Heart right ventricle (tissue), 16 donors: ENCODE measurements at regions of chr1 and their contacts with region 1.

Region 1: GRCh38 chr1:212234431-212235395 is 50.5 kb upstream of the PPP2R5A start:
- DNase-seq: peak in 1 of 2 donors; percentile 73
- ATAC-seq: peak; percentile 94 to 98 (median 96)
- H3K4me3 ChIP-seq: no peak overlapping the region
- H3K27ac ChIP-seq: peak overlapping the region; percentile 59 to 90 (median 75)
- H3K4me1 ChIP-seq: peaks cover 4 to 55% (median 39%) of the 10 kb centered on the region in 9 donors
- H3K27me3 ChIP-seq: no peaks in the 10 kb centered on the region
- CTCF ChIP-seq: no peak

Region 2: DNA sequence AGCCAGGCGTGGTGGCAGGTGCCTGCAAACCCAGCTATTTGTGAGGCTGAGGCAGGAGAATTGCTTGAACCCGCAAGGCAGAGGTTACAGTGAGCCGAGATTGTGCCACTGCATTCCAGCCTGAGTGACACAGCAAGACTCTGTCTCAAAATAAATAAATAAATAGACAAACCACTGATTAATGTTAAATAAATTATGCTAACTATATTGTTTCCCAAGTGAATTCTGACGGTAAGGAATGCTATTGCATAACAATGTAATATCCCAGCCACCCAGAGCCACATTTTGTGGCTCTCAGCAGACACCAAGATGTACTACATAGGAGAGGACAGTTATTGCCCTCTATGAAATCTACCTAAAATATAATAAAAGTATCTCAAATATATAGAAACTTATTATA is 459.5 kb before region 1 on chr1:
- intact Hi-C with region 1: no loop called
- DNase-seq: no peak
- ATAC-seq: no peak
- H3K4me3 ChIP-seq: no peak overlapping the region
- H3K27ac ChIP-seq: no peak overlapping the region
- H3K4me1 ChIP-seq: no peaks in the 10 kb centered on the region
- H3K27me3 ChIP-seq: no peaks in the 10 kb centered on the region
- CTCF ChIP-seq: no peak

Region 3: DNA sequence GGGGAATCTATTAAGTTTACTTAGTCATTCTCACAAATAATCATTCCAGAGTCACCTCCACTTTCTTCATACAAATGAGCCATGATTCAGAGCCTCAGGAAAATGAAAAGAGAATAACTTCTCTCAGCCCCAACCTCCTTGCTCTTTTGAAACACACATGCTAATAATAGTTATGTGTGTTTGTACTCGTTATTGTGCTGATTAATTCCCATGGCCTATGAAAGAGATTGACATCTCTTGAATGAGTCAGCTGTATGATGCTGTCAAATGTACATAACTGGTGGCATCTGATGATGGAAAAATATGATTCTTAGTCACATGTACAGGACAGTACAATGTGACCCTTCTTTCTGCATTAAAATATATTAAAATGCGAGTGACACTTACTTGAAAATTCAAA is 157.7 kb before region 1 on chr1:
- intact Hi-C with region 1: loop called in 1 of 10 experiments (anchors 2 kb)
- DNase-seq: no peak
- ATAC-seq: peak in 1 of 8 donors; percentile 34
- H3K4me3 ChIP-seq: no peak overlapping the region
- H3K27ac ChIP-seq: no peak overlapping the region
- H3K4me1 ChIP-seq: peaks cover 0 to 27% (median 5%) of the 10 kb centered on the region in 9 donors
- H3K27me3 ChIP-seq: no peaks in the 10 kb centered on the region
- CTCF ChIP-seq: no peak

Region 4: DNA sequence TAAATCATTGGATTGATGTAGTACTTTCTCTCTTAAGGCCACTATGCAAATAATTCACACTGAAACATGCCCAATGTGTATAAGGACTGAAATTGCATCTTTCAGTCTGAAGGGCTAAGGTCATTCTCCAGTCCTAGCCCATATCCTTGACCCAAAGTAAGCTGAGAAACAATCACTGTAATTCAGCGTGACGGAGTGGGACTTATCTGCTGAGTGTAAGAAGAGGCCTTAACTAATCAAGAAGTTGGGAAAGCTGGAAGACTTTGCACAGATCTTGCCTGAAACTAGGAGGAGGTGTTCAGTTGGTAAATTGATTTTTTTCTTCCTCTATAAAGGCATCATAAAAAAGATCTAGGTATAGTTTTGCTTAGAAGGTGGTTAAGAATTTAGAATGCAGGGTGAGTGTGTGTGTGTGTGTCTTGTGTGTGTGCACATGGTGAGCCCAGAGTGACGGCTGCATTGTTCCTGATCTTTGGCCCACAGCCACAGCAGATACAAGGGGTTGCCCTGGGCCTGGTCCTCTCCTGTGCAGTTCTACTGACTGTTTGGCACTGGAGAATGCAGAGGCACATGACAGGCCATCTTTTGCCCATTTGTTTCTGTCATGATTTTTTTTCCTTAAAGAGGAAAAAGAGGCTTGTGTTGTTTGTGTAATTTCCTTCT is 37.2 kb after region 1 on chr1:
- intact Hi-C with region 1: loop called in 1 of 10 experiments (anchors 5 kb)
- DNase-seq: peak in 1 of 2 donors; percentile 33
- ATAC-seq: peak in 5 of 8 donors; percentile 61 to 92 (median 70)
- H3K4me3 ChIP-seq: no peak overlapping the region
- H3K27ac ChIP-seq: no peak overlapping the region
- H3K4me1 ChIP-seq: peaks cover 0 to 14% (median 7%) of the 10 kb centered on the region in 9 donors
- H3K27me3 ChIP-seq: no peaks in the 10 kb centered on the region
- CTCF ChIP-seq: no peak